Activated CD8-positive, alpha-beta T cell treated with anti-CD3 and anti-CD28 coated beads, Interleukin-2, amount 10 ng/mL, durations not matched to agents 7 days and 5 days (primary cell): ENCODE measurements at regions of chr2 and their contacts with region 1.

Region 1: GRCh38 chr2:240143801-240144648 is 3.6 kb upstream of the OTOS start:
- DNase-seq: peak; percentile 84
- ATAC-seq: peak; percentile 93
- H3K4me3 Mint-ChIP-seq: no peak overlapping the region
- H3K27ac Mint-ChIP-seq: no peak overlapping the region
- H3K4me1 Mint-ChIP-seq: no peaks in the 10 kb centered on the region
- H3K27me3 Mint-ChIP-seq: no peaks in the 10 kb centered on the region

Region 2: GRCh38 chr2:240060977-240061591 is 82.9 kb before region 1 on chr2:
- CTCF ChIA-PET with region 1: interaction called, 73 read pairs
- POLR2A ChIA-PET with region 1: no interaction called
- DNase-seq: peak; percentile 62
- ATAC-seq: peak; percentile 84
- H3K4me3 Mint-ChIP-seq: no peak overlapping the region
- H3K27ac Mint-ChIP-seq: no peak overlapping the region
- H3K4me1 Mint-ChIP-seq: no peaks in the 10 kb centered on the region
- H3K27me3 Mint-ChIP-seq: peaks cover 23% of the 10 kb centered on the region

Region 3: GRCh38 chr2:240066487-240066886 is 77.5 kb before region 1 on chr2:
- CTCF ChIA-PET with region 1: interaction called, 73 read pairs
- POLR2A ChIA-PET with region 1: no interaction called
- DNase-seq: no peak
- ATAC-seq: no peak
- H3K4me3 Mint-ChIP-seq: no peak overlapping the region
- H3K27ac Mint-ChIP-seq: no peak overlapping the region
- H3K4me1 Mint-ChIP-seq: no peaks in the 10 kb centered on the region
- H3K27me3 Mint-ChIP-seq: peaks cover 35% of the 10 kb centered on the region

Region 4: DNA sequence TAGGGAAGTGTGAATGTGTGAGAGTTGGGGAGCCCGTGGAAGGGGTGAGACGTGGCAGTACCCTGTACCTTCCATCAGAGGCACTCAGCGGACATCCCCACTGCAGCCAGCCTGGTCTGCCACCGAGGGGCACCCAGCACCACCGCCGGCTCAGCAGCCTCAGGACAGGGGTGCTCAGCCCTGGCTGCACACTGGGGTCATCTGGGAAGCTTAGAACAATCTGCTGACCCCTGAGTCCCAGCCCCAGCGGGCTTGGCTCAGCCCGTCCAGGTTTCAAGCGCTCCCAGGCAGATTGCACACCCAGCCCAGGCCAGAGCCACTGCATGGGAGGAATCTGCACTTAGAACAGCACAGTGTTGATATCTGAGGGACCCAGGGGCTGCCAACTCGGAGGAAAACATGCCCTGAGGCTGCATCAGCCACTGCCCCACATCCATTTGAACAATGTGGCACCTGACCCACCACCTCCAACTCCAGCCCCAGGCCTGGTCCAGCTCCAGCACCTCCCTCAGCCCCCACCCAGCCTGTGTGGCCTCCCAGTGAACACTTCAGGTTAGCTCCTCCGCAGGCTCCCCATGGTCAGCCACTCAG is 143.6 kb after region 1 on chr2:
- CTCF ChIA-PET with region 1: no interaction called
- POLR2A ChIA-PET with region 1: no interaction called
- DNase-seq: peak; percentile 13
- ATAC-seq: no peak
- H3K4me3 Mint-ChIP-seq: no peak overlapping the region
- H3K27ac Mint-ChIP-seq: no peak overlapping the region
- H3K4me1 Mint-ChIP-seq: no peaks in the 10 kb centered on the region
- H3K27me3 Mint-ChIP-seq: peaks cover 3% of the 10 kb centered on the region